Cardiac septum (tissue), 1 donor: ENCODE measurements at regions of chr3 and their contacts with region 1.

Region 1: GRCh38 chr3:39911465-39912309 is 102.3 kb downstream of the MYRIP start:
- DNase-seq: no peak

Region 2: GRCh38 chr3:39718674-39719595 is 192.8 kb before region 1 on chr3:
- intact Hi-C with region 1: no loop called
- DNase-seq: no peak

Region 3: GRCh38 chr3:39962581-39962980 is 50.9 kb after region 1 on chr3:
- intact Hi-C with region 1: loop called (anchors 5 kb)
- DNase-seq: no peak

Region 4: DNA sequence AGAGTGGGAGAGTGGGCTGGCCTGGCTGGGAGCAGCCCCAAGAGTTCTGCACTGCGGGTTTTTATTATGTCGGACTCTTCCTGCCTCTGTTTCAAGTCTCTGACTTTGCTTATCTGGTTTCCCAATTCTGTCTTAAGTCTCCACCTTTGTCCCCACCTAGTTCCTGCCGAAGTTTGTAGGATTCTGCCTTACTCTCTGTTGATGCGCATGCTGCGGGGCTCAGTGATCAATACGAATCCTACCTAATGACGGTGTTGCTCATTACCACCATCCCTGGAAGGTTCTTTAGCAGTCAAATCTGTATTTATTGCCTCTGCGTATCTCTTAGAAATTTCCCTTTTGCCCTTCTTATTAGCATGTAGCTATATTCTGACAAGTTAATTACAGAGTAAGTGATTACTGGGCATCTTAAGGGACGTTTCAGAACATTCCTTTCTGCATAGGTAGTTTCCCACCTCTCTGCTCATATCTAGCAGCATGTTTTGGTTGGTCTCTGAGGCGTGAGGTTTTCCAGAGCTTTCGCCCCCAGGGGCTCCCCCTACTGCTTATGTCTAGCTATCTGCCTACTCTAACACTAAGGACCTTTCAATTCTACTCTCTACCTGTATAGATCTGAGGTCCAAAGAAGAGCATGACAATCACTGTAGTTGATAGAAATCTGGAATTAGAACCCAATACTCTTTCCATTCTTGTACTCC is 161.8 kb after region 1 on chr3:
- intact Hi-C with region 1: no loop called
- DNase-seq: no peak